Transverse colon (tissue), 4 donors: ENCODE measurements at regions of chr2 and their contacts with region 1.

Region 1: DNA sequence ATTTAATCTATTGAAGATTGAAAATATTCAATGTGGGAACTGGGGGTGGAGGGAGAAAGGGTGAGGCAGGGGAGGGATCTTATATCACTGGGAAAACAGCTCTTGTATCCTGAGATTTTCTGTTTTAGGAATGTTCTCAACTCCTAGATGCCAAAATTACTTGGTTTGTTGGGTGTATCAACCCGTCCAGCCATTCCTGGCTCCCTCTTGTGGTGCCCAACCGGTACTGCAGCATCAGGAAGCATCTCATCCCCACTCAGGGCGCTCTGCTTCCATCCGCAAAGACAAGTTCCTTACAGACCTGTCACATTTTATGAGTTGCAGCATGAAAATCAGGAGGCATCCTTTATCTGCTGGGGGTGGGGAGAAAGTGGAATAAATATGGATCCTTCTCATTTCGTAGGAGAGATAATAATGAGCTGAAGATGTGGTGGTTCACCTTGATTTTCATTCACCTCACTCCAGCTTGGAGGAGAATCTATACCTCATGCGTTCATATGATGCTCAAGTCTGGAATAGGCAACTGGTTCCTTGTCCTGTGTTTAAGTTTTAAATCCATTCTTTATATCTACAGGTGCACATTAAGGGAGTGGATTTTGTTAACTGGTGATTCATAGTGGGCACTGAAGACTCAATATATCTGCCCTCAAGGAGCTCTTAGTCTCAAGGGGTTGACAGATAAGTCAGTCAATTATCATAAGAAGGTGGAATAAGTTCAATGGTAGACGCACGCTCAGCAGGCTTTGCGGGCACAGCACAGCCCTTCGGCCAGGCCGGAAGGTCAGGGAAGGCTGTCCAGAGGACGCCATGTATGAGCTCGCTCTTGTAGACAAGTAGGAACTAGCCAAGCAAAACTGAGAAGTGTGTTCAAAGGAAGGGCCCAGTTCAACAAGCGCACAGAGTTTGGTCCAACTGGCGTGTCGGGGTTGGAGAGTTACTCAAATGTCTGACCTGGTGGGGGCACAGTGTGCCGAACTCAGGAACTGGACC is 127.3 kb downstream of the RNF144A start:
- DNase-seq: peak; percentile 69
- H3K4me3 ChIP-seq: no peak overlapping the region
- H3K27ac ChIP-seq: no peak overlapping the region
- H3K4me1 ChIP-seq: no peaks in the 10 kb centered on the region
- H3K27me3 ChIP-seq: no peaks in the 10 kb centered on the region
- CTCF ChIP-seq: peak; percentile 83 to 95 (median 94)
- EP300 ChIP-seq: no peak
- POLR2A ChIP-seq: no peak

Region 2: DNA sequence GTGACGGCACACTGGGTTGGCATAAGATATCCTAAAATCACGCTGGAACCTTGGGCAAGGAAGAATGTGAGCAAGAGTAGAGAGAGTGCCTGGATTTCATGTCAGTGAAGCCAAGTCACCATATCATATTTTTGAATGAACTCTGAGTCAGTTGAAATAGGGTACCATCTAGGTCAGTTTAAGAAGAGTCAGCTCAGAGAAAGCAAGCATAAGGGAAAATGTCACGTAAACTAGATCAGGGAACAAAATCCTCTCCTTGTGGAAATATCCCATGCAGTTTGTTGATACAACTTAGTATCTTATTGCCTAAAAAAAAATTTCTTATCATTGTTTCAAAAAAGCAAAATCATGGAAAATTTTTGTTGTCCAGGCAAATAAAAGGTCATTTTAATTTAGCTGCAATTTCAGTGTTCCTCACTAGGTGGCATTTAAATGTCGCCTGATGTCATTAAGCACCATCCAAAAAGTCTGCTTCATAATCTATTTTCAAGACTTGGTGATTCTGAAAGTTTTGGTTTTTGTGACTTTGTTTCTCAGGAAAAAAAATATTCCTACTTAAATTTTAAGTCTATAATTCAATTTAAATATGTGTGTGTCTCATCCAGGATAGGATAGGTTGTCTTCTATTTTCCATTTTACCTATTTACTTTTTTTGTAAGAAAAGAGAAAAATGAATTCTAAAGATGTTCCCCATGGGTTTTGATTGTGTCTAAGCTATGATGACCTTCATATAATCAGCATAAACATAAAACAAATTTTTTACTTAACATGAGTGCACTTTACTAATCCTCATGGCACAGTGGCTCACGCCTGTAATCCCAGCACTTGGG is 147.4 kb before region 1 on chr2:
- in situ Hi-C with region 1: loop called in 2 of 4 experiments (anchors 10 kb)
- intact Hi-C with region 1: loop called (anchors 5 kb)
- DNase-seq: no peak
- H3K4me3 ChIP-seq: no peak overlapping the region
- H3K27ac ChIP-seq: no peak overlapping the region
- H3K4me1 ChIP-seq: no peaks in the 10 kb centered on the region
- H3K27me3 ChIP-seq: no peaks in the 10 kb centered on the region
- CTCF ChIP-seq: peak; percentile 62 to 77 (median 70)
- EP300 ChIP-seq: no peak
- POLR2A ChIP-seq: no peak

Region 3: DNA sequence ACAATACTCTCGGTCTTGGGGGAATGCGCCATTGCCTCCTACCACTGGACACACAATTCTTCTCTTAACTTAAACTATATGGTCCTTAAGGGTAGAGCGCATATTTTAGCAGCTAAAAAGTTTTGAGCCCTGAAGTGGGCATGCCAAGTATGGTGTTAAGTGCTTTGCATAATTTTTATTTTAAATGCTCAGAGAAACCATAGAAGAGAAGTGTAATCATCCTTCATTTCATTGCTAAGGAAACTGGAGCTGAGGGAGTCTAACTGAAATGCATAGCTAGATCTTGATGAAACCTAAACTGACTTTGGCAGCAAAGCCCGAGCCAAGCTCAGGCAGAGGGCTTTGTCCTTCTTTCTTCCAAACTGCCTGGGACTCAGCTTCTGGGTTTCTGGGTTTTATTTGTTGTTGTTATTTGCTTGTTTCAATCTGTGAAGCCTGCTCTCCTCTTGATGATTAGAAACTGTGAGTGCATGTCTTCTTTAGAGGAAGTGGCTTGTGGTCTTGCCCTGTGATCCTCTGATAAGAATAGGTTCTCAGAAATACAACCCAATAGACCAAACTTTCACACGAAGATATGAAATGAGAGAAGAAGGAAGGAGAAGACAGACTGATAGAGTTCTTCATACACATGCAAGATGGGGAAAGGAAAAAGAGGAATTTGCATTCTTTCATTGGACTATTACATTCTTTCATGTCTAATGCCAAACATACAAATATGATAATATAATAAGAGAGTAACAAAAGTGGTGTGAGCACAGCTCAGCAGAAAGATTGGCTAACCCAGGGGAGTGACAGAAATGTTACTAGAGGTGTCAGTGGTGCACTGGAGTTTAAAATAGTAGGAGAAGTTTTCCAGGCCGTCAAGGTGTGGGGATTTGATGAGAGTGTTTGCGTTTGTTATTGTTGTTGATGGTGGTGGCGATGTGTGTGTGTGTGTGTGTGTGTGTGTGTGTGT is 134.8 kb before region 1 on chr2:
- in situ Hi-C with region 1: loop called in 1 of 4 experiments (anchors 10 kb)
- intact Hi-C with region 1: no loop called
- DNase-seq: no peak
- H3K4me3 ChIP-seq: no peak overlapping the region
- H3K27ac ChIP-seq: no peak overlapping the region
- H3K4me1 ChIP-seq: peaks cover 0 to 7% (median 0%) of the 10 kb centered on the region in 4 donors
- H3K27me3 ChIP-seq: no peaks in the 10 kb centered on the region
- CTCF ChIP-seq: no peak
- EP300 ChIP-seq: no peak
- POLR2A ChIP-seq: no peak

Region 4: DNA sequence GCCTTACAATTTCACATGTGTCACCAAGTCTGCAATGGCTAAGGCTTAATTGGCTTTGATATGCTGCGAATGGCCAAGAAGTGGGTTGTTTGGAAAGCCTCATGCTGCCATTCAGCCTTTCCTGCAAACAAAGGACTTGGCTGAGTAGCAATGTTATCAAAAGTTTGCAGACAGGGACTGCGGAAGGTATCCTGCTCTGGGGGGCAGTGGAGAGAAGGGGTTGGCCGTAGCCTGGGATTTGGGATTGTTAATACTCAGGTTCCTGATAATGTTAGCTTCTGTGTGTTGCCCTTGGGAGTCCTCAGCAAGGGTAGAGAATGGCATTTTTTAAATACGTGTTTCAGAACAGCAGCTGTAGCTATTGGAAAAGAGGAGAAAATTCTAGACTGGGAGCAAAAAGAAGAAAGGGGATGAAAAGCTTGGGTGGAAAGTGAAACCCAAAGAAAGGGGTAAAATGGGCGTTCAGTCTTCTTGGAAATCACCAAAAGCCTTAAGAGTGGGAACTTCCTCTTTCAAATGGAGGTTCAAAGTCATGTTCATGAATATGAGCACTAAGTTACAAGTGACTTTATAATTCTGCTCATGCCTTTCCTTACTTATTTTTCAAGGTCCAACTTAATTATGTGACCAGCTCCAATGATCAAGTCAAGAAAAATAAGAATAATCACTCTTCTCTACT is 197.8 kb after region 1 on chr2:
- in situ Hi-C with region 1: no loop called
- intact Hi-C with region 1: no loop called
- DNase-seq: no peak
- H3K4me3 ChIP-seq: no peak overlapping the region
- H3K27ac ChIP-seq: no peak overlapping the region
- H3K4me1 ChIP-seq: no peaks in the 10 kb centered on the region
- H3K27me3 ChIP-seq: no peaks in the 10 kb centered on the region
- CTCF ChIP-seq: no peak
- EP300 ChIP-seq: no peak
- POLR2A ChIP-seq: no peak

Region 5: DNA sequence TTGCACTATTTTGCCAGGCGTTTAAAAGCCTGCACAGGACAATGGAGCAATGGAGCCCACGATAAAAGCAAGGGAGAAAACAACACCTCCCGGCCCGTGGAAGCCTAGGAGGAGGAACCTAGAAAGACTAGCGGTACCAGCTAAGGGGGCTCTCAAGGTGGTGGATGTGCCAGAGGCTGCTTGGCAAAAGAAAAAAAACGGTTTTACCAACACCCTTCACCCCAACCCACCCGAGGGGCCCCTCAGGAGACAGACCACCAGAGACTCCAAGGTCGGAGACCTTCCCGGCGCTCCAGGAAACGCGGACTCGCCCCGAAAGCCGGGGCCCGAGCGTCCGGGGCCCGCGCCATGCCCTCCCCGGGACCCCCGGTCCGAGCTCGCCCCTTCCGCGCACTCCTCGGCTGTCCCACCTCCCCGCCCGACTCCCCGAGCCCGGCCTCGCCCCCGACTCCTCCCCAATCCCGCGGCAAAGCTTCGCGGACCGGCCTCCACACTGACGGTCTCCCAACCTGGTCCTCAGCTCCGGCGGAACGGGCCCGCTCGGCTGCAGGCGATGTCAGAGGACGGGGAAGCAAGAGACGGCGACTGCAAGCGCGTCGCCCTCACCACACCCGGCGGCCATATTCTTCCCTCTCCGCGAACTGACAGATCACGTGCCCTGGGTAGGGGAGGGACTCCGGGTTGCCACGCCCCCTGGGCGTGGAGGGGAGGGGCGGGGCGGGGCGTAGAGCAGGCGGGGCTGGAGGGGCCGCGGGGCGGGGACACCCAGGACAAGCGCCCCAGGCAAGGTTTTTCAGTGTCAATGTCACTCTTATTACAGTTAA is 1792.6 kb after region 1 on chr2 and contains the start of gene KIDINS220:
- in situ Hi-C with region 1: no loop called
- intact Hi-C with region 1: no loop called
- DNase-seq: peak; percentile 89
- H3K4me3 ChIP-seq: peak within 1 kb of the TSS; percentile 60 to 100 (median 90)
- H3K27ac ChIP-seq: peak within 1 kb of the TSS; percentile 85 to 93 (median 88)
- H3K4me1 ChIP-seq: peaks cover 5 to 30% (median 22%) of the 10 kb centered on the region in 4 donors
- H3K27me3 ChIP-seq: no peaks in the 10 kb centered on the region
- CTCF ChIP-seq: no peak
- EP300 ChIP-seq: no peak
- POLR2A ChIP-seq: peak; percentile 81
- total RNA-seq, gene KIDINS220: 79.3 to 110 (median 85.9) TPM